Right cardiac atrium (tissue), 5 donors: ENCODE measurements at regions of chr19 and their contacts with region 1.

Region 1: DNA sequence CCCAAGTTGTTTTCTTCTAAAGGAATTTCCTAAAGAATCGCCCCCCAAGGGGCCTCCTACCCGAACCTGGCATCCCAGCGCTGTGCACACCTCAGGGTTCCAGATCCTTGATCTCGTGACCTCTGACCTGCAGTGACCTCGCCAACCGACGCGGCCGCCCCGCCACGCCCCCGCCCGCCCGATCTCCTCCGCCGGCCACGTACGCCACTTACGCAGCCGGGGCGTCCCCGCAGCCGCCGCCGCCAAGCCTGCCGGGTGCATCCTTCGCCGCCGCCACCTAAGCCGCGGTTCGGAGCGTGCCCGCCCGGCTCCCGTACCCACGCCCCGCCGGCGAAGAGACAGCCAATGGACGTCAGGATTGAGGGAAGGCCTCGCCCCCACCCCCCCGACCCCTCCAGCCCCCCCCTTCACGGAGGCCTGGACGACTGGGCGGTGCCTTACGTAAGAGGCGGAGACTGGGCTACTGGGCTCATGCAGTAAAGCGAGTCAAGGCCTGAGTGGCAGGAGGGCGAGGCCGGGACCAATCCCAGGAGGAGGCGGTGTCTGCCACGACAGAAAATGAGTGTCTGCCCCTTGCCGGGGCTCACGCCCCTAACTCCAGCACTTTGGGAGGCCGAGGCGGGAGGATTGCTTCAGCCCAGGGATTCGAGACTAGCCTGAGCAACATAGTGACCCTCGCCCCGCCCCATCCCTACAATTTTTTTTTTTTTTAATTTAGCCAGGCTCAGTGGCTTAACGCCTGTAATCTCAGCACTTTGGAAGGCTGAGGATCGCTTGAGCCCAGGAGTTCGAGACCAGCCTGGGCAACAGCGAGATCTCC is at the start of gene YIF1B:
- DNase-seq: peak; percentile 98 to 99 (median 98)
- ATAC-seq: peak; percentile 96 to 97
- H3K4me3 ChIP-seq: peak within 1 kb of the TSS; percentile 53
- H3K27ac ChIP-seq: peak within 1 kb of the TSS; percentile 73
- H3K4me1 ChIP-seq: peaks cover 4% of the 10 kb centered on the region
- H3K27me3 ChIP-seq: no peaks in the 10 kb centered on the region
- total RNA-seq, gene YIF1B: 15.9 to 24.4 (median 19.9) TPM

Region 2: DNA sequence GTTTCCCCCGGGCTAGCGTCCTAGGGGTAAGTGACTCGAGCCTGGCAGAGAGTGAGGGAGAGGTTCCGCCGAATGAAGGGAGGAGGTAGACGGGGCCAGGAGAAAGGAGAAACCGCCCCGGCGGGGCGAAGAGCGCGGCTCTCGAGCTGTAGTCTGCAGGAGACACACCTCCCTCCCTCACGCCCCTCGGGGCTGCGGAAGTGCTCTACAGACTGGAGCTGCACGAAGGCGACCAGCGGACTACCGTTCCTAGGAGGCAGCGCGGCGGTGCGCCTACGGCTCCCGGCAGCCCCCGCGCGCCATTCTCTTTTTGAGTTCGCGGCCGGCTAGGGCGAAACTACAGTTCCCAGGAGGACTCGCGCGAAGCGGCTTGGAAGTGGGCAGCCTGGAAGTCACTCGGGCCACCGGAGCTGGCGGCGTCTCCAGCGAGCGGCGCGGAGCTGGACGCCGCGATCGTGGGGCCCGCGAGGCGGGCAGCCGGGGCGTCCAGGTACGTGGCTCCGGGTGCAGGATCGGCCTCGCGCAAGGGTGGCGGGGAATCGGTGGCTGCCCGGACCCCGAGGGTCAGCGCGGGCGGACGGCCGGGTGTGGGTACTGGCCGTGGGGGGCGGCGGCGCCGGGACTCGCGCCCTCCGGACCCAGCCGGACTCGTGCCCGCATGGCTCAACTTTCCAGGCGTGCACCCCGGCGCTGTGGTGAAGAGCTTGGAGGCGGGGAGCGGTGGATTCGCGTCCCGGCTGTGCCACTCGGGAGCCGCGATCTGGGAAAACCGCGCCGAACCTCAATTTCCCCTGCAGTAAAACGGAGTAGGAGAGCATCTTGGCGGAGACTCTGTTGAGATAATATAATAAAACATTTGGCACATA is 408.8 kb before region 1 on chr19 and contains the start of gene SIPA1L3:
- intact Hi-C with region 1: loop called in 1 of 4 experiments (anchors 10 kb)
- DNase-seq: peak; percentile 95 to 98 (median 97)
- ATAC-seq: peak; percentile 99
- H3K4me3 ChIP-seq: peak within 1 kb of the TSS; percentile 88
- H3K27ac ChIP-seq: peak within 1 kb of the TSS; percentile 39
- H3K4me1 ChIP-seq: peaks cover 6% of the 10 kb centered on the region
- H3K27me3 ChIP-seq: no peaks in the 10 kb centered on the region
- total RNA-seq, gene SIPA1L3: 7.5 to 19.8 (median 12.4) TPM

Region 3: DNA sequence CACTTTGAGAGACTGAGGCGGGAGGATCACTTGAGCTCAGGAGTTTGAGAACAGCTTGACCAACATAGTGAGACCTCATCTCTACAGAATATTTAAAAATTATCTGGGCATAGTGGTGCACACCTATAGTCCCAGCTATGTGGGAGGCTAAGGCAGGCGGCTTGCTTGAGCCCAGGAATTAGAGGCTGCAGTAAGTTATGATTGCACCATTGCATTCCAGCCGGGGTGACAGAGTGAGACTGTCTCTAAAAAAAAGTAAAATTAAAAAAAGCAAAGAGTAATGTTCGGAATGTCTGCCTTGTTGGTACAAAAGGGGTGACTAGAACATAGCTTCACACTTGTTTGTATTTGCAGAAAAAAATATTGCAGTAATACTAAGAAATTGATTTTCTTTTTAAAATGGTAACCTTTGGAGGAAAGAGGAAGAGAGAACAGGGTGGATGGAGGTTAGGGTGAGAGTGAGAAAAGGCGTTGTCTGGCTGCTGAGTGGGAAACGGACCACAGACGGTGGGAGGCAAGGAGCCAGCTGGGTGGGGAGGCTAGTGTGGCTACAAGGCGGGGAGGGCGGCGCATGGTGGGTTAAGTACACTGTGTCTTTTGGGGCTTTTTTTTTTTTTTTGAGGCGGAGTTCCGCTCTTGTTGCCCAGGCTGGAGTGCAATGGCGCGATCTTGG is 69.9 kb before region 1 on chr19:
- intact Hi-C with region 1: loop called in 2 of 4 experiments (anchors 5 kb)
- DNase-seq: peak in 2 of 3 donors; percentile 68 to 87
- ATAC-seq: peak; percentile 5 to 10
- H3K4me3 ChIP-seq: no peak overlapping the region
- H3K27ac ChIP-seq: no peak overlapping the region
- H3K4me1 ChIP-seq: no peaks in the 10 kb centered on the region
- H3K27me3 ChIP-seq: no peaks in the 10 kb centered on the region

Region 4: DNA sequence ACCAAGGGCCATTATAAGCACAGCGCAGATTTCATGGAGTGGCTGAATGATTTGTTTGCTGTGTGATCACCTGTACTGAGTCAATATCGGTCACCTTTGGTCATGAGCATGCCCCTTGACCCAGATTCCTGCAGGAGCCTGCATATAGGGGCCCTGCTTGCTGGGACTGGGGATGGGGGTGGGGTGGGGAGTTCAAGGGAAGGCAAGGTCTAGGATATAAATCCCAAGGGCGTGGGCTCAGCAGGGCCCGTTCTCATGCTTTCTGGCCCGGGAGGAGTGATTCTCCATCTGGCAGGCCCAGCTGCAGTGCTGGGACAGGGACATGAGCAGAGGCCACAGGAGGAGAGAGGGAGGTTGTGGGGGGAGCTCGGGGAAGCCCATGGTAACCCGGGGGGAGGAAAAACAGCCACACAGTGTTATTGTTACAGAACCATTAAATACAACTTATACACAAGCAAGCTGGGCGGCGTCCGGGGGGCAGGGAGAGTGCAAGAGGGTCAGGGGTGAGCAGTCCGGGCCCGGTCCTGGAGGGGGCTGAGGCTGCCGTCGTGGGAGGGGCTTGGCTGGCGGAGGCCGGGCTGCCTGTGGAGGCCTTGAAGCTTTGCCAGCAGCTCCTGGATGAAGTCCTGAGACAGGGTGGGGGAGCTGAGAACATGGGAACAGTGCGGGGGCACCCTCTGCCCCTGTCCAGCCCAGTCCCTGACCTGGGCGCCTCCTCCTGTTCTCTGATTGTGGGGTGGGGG is 64.9 kb before region 1 on chr19:
- intact Hi-C with region 1: loop called in 2 of 4 experiments (anchors 5 kb)
- DNase-seq: peak; percentile 88 to 94 (median 94)
- ATAC-seq: peak; percentile 71 to 75
- H3K4me3 ChIP-seq: peak overlapping the region; percentile 20
- H3K27ac ChIP-seq: peak overlapping the region; percentile 96
- H3K4me1 ChIP-seq: peaks cover 4% of the 10 kb centered on the region
- H3K27me3 ChIP-seq: no peaks in the 10 kb centered on the region

Region 5: GRCh38 chr19:38277969-38278680 is 37.7 kb before region 1 on chr19:
- intact Hi-C with region 1: loop called in 1 of 4 experiments (anchors 5 kb)
- DNase-seq: peak; percentile 78 to 90 (median 83)
- ATAC-seq: peak; percentile 87 to 95
- H3K4me3 ChIP-seq: no peak overlapping the region
- H3K27ac ChIP-seq: peak overlapping the region; percentile 91
- H3K4me1 ChIP-seq: peaks cover 11% of the 10 kb centered on the region
- H3K27me3 ChIP-seq: no peaks in the 10 kb centered on the region